ENCODE measurements at regions of chr4 and their contacts with region 1.

Region 1: DNA sequence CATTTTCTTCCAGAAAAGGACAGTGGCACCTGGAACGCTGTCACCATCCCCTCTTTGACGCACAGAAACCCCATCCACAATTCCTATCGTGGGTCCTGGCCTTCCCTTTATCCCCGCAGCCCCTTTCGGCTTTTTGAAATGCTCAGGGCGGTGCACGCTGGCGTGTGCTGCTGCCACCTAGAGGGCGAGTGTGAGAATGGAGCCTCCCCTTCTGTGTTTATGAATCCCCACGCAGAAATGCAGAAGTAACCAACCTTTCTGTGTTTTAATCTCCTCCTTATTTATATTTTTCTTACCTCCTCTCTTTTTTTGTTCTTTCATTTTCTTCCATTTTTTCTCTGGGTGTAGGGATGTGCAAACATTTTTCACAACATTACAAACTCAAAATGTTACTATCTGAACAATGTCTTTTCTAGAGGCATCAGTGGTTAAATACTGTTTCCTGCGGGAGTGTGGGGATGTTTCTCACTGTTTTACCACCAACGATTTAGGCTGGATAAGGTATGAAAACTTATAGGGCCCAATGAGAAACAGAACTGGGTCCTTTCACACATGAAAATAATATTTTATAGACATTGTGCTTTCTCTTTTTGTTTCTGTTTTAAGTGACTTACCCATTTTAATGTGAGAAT is 50.0 kb downstream of the TMA16 start:
- DNase-seq: peak; percentile 77
- CTCF ChIP-seq: peak; percentile 93

Region 2: DNA sequence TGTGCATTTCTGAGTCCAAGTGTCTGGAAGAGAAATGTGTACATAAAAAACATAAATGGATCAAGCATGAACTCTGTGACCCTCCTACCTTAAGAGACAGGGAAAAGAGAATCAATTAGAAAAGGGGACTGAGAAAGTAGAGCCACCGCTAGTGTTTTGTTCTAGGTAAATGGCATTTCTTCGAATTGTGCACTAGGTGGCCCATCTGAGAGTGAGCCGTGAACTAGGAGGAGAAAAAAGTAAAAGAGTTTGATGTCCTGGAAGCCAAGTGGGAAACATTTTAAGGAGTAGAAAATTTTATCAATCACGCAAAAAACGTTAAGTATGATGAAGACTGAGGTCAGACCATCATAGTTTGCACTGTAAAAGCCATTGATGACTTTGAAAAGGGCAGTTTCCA is 432.9 kb before region 1 on chr4:
- CTCF ChIA-PET with region 1: interaction called, 17 read pairs
- POLR2A ChIA-PET with region 1: no interaction called
- DNase-seq: no peak
- CTCF ChIP-seq: no peak

Region 3: DNA sequence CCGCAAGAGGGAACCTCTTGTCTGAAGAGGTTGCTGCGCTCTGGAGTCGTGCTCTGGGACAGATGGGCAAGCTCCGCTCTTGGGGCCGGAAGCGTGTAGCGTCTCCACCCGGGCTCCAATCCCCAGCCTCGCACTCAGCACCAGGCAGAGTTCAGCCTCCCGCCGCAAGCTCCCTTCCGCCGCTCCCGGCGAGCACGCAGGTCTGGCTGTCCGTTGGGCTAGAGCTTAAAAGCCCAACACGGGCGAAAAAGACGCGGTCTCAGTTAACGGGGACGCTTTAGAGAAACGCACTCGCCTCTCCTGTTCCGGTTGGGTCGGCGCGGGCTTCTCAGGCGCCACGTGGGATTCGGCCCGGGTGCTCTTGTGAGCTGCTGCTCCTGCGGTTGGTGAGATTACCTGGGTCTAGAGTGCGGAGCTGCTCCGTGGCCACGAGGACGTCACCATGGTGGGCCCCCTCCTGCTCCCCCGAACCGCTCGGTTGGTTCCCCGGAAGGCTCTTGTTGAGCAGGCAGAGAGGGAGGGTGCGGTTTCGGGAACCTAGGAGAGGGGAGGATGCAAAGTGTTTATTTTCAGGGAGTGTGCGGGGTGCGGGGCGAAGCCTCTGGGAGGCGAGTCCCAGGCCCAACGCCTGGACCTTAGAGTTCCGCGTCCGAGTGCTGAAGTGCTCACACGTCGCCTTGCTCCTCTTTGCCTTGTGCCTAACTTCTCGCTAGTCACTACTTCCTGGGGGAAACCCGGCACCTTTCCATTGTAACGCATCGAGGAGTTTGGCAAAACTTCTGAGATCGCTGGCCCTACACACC is 50.0 kb before region 1 on chr4 and contains the start of gene TMA16:
- CTCF ChIA-PET with region 1: interaction called, 37 read pairs
- POLR2A ChIA-PET with region 1: interaction called, 4 read pairs
- DNase-seq: peak; percentile 83
- CTCF ChIP-seq: no peak

Region 4: DNA sequence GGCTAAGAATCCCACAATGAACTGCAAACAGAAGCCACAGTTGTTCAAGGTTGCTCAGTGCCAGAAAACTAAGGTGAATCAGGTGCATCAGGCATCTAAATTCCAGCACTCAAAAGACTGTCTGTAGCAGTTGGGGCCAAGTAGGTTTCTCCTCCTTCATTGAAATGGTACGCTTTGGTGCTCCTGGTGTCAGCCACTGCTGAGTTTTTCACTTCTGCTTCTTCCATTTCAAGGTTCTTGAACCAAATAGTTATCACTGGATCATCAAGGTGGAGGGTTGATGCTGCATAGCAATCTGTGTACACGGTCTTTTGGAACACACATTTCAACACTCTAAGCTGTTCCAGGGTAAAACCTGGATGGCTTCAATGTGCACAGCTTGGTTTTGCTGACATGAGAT is 24.3 kb after region 1 on chr4:
- CTCF ChIA-PET with region 1: interaction called, 57 read pairs
- POLR2A ChIA-PET with region 1: no interaction called
- DNase-seq: no peak
- CTCF ChIP-seq: no peak

Region 5: GRCh38 chr4:163681208-163681821 is 136.8 kb after region 1 on chr4:
- CTCF ChIA-PET with region 1: interaction called, 87 read pairs
- POLR2A ChIA-PET with region 1: no interaction called
- DNase-seq: peak; percentile 56
- CTCF ChIP-seq: peak; percentile 59

Region 6: DNA sequence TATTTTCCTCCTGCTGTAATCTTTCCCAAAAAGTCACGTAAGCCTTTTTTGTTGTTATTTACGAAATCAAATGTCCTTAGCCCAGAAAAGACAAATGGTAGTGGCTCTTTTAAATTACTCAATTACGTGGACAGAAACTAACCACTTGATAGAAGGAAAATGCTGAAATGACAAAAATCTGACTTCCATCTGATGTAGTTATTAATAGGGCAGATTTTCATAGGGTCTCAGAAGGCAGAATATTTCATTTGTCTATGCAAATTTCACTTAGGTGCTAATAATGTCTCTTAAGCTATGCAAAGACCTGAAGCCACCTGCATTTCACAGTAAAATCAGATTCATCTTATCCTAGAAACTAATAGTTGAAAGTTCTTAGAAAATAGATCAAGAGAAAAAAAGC is 245.7 kb after region 1 on chr4:
- CTCF ChIA-PET with region 1: no interaction called
- POLR2A ChIA-PET with region 1: no interaction called
- DNase-seq: no peak
- CTCF ChIP-seq: no peak

Region 7: DNA sequence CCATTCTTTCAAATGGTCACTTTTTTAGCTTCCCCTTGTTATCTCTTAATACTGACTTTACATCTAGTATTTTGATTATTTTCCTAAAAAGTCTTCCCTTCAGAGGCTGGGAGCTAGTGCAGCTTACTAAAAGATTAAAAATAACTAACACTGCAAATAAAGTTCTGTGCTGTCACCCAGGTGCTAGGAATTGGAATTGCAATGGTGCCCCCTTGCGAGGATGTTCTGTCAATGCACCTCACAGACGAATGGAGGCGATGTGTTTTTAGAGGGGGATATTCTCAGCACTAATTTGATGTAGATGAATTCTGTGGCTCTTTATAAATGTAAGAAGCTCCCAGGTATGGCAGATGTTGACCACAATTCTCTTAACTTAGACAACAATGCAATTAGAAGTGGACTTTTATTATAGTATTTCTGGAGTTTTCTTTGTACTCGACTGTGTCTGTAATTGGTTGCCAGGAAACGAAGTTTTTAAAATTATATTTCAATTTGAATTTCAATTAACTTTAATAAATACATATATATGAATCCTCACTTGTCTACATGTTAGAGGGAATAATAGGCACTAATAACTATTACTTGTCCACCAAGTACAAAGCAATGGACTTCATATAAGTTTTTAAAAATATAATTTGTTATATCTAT is 1187.4 kb after region 1 on chr4:
- CTCF ChIA-PET with region 1: interaction called, 37 read pairs
- POLR2A ChIA-PET with region 1: no interaction called
- DNase-seq: peak; percentile 50
- CTCF ChIP-seq: peak; percentile 89